PC-3 (cell line): ENCODE measurements at regions of chr6 and their contacts with region 1.

Region 1: GRCh38 chr6:107318100-107318736 is 141.1 kb downstream of the PDSS2 start:
- DNase-seq: peak; percentile 53
- ATAC-seq: peak; percentile 78
- H3K4me3 ChIP-seq: no peak overlapping the region
- H3K27ac ChIP-seq: no peak overlapping the region
- H3K4me1 ChIP-seq: no peaks in the 10 kb centered on the region
- H3K27me3 ChIP-seq: no peaks in the 10 kb centered on the region
- CTCF ChIP-seq: peak; percentile 67

Region 2: DNA sequence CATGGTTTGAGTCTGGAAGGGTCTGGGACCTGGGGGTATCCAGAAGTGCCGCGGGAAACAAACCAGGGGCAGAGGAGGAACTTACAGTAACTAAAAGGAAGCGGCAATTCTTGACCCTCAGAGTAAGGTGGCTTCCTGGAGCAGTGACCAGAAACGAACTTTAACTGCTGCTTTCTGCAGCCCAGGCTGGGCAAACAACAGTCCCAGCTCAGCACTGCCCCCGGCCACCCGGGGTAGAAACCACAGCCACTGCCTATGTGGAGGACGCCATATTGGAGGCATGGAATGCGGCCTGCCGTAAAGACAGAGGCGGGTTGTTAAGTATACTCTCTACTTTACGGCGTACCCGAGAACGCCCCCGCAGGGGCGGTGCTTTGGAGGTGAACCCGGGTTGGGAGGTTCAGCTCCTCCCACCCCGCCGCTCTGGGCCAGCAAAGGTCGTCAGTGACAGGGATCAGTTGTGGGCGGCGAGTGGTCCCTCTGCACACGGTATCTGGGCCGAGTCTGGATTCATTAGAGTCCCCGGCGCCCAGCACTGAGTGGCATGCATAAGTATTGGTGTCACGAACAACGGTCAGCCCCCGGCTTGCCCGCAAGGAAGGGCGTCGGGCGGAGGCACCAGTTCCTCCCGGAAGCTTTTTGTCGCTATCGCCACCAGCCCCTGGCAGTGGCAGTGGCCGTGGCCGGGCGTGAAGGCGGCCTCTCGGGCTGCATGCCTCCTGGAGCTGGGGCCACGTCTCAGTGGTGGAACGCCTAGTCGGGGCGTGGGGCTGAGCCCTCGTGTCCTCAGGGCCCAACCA is 141.3 kb after region 1 on chr6 and contains the start of gene PDSS2:
- CTCF ChIA-PET with region 1: interaction called, 6 read pairs
- POLR2A ChIA-PET with region 1: no interaction called
- intact Hi-C with region 1: loop called (anchors 2 kb)
- DNase-seq: peak; percentile 94
- ATAC-seq: peak; percentile 92
- H3K4me3 ChIP-seq: peak within 1 kb of the TSS; percentile 91
- H3K27ac ChIP-seq: peak within 1 kb of the TSS; percentile 35
- H3K4me1 ChIP-seq: peaks cover 6% of the 10 kb centered on the region; the same call in 1 of the 2 replicates
- H3K27me3 ChIP-seq: no peaks in the 10 kb centered on the region
- CTCF ChIP-seq: peak; percentile 49
- total RNA-seq, gene PDSS2: 5.4 and 6.6 TPM in 2 replicates

Region 3: GRCh38 chr6:107576852-107577251 is 258.6 kb after region 1 on chr6:
- CTCF ChIA-PET with region 1: no interaction called
- POLR2A ChIA-PET with region 1: interaction called, 10 read pairs
- intact Hi-C with region 1: no loop called
- DNase-seq: peak; percentile 13
- ATAC-seq: no peak
- H3K4me3 ChIP-seq: no peak overlapping the region
- H3K27ac ChIP-seq: no peak overlapping the region
- H3K4me1 ChIP-seq: no peaks in the 10 kb centered on the region
- H3K27me3 ChIP-seq: peaks cover 30% of the 10 kb centered on the region
- CTCF ChIP-seq: no peak